Dendritic cell treated with granulocyte-macrophage colony-stimulating factor and Interleukin-4, amounts not matched to agents 40 ng/mL and 50 ng/mL, for 4 days (primary cell): ENCODE measurements at regions of chr11 and their contacts with region 1.

Region 1: DNA sequence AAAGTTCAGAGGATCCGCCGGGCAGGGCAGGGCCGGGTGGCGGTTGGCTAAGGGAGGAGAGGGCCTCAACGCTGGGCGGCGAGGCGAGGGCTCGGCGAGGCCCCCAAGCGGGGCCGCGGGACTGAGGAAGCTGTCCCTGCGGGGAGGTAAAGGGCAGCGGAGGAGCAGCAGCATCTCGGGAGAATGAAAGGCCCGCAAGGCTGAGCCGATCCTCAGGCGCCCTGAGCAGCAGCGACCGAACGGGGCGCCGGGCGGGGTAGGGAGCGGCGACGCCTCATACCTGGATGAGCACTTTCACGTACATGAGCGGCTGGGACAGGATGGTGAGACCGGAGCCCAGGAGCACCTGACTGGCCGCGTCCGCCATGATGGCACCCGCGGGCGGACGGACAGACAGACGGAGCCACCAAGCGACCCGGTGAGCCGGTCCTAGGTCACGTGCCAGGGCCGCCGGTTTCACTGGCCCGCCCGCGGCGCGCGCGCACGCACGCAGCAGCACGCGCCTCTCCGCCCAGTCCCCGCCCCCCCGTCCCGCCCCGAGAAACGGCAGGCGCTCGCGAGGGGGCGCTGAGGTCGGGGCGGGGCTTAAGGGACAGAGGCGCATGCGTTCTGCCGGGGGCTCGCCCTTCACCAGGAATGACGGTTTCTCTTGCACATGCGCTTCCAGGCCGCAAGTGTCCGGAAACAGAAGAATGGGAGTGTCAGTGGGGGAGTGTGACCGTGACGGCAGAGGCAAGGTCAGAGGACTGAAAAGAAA is at the start of gene MTCH2:
- H3K4me3 Mint-ChIP-seq: peak within 1 kb of the TSS; percentile 97
- H3K27ac Mint-ChIP-seq: peak within 1 kb of the TSS; percentile 97
- H3K4me1 Mint-ChIP-seq: peaks cover 14% of the 10 kb centered on the region
- H3K27me3 Mint-ChIP-seq: no peaks in the 10 kb centered on the region

Region 2: GRCh38 chr11:47593934-47594855 is 48.1 kb before region 1 on chr11 and contains the start of gene C1QTNF4:
- intact Hi-C with region 1: no loop called
- H3K4me3 Mint-ChIP-seq: peak within 1 kb of the TSS; percentile 21
- H3K27ac Mint-ChIP-seq: no peak within 1 kb of the TSS
- H3K4me1 Mint-ChIP-seq: peaks cover 29% of the 10 kb centered on the region
- H3K27me3 Mint-ChIP-seq: peaks cover 41% of the 10 kb centered on the region

Region 3: DNA sequence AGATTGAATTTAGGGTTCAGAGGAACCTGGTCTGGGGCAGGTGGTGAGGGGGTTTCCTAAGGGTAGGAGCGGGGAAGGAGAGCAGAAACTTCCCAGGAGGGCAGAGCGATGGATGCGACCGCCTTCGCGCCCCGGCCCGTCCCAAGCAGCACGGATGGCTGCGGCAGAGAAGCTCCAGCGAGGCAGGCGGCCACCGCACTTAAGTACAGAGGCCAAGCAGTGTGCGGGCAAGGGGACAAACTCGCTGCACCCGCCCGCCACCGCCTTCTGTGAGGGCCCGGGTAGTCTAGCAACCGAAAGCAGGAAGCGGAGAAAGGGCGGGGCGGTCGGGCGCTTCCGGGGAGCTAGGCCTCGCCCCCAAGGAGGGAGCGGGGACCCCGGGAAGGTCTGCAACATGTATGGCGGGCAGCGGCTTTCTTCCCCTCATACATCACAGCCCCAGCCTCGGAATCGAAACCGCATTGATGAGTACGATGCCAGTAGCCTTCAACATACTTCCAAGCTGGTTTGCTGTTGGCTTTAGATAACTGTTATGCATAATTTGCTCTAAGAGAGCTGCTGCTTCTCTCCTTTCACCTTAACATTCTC is 72.9 kb after region 1 on chr11 and contains the start of gene AGBL2:
- intact Hi-C with region 1: loop called (anchors 2 kb)
- H3K4me3 Mint-ChIP-seq: peak within 1 kb of the TSS; percentile 99
- H3K27ac Mint-ChIP-seq: peak within 1 kb of the TSS; percentile 89
- H3K4me1 Mint-ChIP-seq: peaks cover 11% of the 10 kb centered on the region
- H3K27me3 Mint-ChIP-seq: no peaks in the 10 kb centered on the region

Region 4: GRCh38 chr11:47967577-47968425 is 325.5 kb after region 1 on chr11:
- intact Hi-C with region 1: no loop called
- H3K4me3 Mint-ChIP-seq: no peak overlapping the region
- H3K27ac Mint-ChIP-seq: peak overlapping the region; percentile 42
- H3K4me1 Mint-ChIP-seq: peaks cover 10% of the 10 kb centered on the region
- H3K27me3 Mint-ChIP-seq: no peaks in the 10 kb centered on the region

Region 5: GRCh38 chr11:48129697-48130395 is 487.6 kb after region 1 on chr11:
- intact Hi-C with region 1: no loop called
- H3K4me3 Mint-ChIP-seq: no peak overlapping the region
- H3K27ac Mint-ChIP-seq: peak overlapping the region; percentile 55
- H3K4me1 Mint-ChIP-seq: peaks cover 22% of the 10 kb centered on the region
- H3K27me3 Mint-ChIP-seq: no peaks in the 10 kb centered on the region

Region 6: GRCh38 chr11:48172818-48173609 is 530.7 kb after region 1 on chr11:
- intact Hi-C with region 1: no loop called
- H3K4me3 Mint-ChIP-seq: no peak overlapping the region
- H3K27ac Mint-ChIP-seq: no peak overlapping the region
- H3K4me1 Mint-ChIP-seq: peaks cover 35% of the 10 kb centered on the region
- H3K27me3 Mint-ChIP-seq: peaks cover under 1% of the 10 kb centered on the region